ENCODE measurements at regions of chr7 and their contacts with region 1.

Region 1: DNA sequence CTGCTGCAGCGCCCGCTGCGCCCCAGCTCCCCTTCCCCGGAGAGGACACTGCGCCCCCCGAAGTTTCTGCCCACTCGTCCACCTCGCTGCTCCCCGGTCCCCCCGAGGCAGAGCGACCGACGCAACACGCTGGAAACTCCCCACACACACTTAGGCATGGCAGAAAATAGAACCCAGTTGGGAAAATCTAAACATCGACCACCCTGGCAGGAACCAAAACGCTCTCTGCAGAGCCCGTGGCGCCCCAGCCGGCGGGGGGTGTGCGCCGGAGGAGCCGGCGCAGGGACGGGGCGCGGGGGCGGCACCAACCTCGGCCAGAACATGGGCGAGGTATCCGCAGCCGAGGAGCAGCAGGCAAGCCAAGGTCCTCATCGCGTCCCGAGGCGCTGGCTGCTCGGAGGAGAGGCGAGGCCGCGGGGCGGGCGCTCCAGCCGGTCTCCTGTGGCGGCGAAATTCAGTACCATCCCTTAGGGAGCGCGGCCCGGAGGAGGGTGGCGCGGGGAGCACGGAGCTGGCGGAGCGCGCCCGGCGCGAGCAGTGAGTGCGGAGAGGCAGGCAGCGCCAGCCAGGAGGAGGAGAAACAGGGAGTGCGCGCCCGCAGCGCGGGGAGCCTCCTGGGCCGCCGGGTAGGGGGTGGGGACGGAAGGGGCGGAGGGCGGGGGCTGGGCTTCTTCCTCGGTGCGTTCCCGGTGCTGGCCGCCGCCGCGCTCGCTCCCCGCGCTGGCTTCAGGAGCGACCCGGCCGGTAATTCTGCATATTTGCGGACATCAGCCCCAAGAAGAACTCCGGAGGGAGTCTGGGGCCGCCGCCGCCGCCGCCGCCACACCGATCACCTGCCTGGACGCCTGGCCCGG is 789 bp downstream of the PDGFA start:
- DNase-seq: peak; percentile 88 to 90 (median 89)
- ATAC-seq: peak; percentile 54 to 67 (median 63)
- H3K4me3 ChIP-seq: peak overlapping the region; percentile 62 to 93 (median 80)
- H3K27ac ChIP-seq: peak overlapping the region; percentile 78 to 97 (median 90)
- H3K4me1 ChIP-seq: peaks cover 0 to 89% (median 43%) of the 10 kb centered on the region in 12 donors
- H3K27me3 ChIP-seq: peaks cover 0 to 62% (median 0%) of the 10 kb centered on the region in 9 donors
- CTCF ChIP-seq: peak in 1 of 12 donors; percentile 9
- POLR2A ChIP-seq: peak in 1 of 2 donors; percentile 62

Region 2: GRCh38 chr7:593324-594115 is 74.7 kb after region 1 on chr7:
- intact Hi-C with region 1: loop called in 1 of 10 experiments (anchors 5 kb)
- DNase-seq: peak; percentile 40 to 65 (median 51)
- ATAC-seq: peak in 3 of 4 donors; percentile 46 to 61 (median 51)
- H3K4me3 ChIP-seq: peak overlapping the region in 2 of 12 donors; percentile 10
- H3K27ac ChIP-seq: peak overlapping the region in 5 of 12 donors; percentile 30 to 64 (median 43)
- H3K4me1 ChIP-seq: peaks cover 0 to 32% (median 12%) of the 10 kb centered on the region in 12 donors
- H3K27me3 ChIP-seq: no peaks in the 10 kb centered on the region
- CTCF ChIP-seq: no peak
- POLR2A ChIP-seq: no peak

Region 3: GRCh38 chr7:657565-658119 is 138.8 kb after region 1 on chr7:
- intact Hi-C with region 1: loop called in 3 of 10 experiments (anchors 10 kb)
- DNase-seq: peak in 1 of 5 donors; percentile 55
- ATAC-seq: peak; percentile 90 to 99 (median 97)
- H3K4me3 ChIP-seq: peak overlapping the region in 3 of 12 donors; percentile 1 to 13 (median 13)
- H3K27ac ChIP-seq: peak overlapping the region in 11 of 12 donors; percentile 66 to 91 (median 74)
- H3K4me1 ChIP-seq: peaks cover 0 to 14% (median 6%) of the 10 kb centered on the region in 12 donors
- H3K27me3 ChIP-seq: no peaks in the 10 kb centered on the region
- CTCF ChIP-seq: no peak
- POLR2A ChIP-seq: no peak

Region 4: GRCh38 chr7:726084-726853 is 207.4 kb after region 1 on chr7 and contains the start of gene DNAAF5:
- intact Hi-C with region 1: loop called in 7 of 10 experiments (anchors 5 kb)
- DNase-seq: peak; percentile 87 to 92 (median 89)
- ATAC-seq: peak; percentile 62 to 92 (median 88)
- H3K4me3 ChIP-seq: peak within 1 kb of the TSS; percentile 49 to 98 (median 78)
- H3K27ac ChIP-seq: peak within 1 kb of the TSS in 11 of 12 donors; percentile 50 to 83 (median 78)
- H3K4me1 ChIP-seq: peaks cover under 1 to 33% (median 21%) of the 10 kb centered on the region in 12 donors
- H3K27me3 ChIP-seq: no peaks in the 10 kb centered on the region
- CTCF ChIP-seq: peak in 1 of 12 donors; percentile 9
- POLR2A ChIP-seq: peak in 1 of 2 donors; percentile 52
- total RNA-seq, gene DNAAF5: 13.9 to 45.8 (median 23.7) TPM

Region 5: DNA sequence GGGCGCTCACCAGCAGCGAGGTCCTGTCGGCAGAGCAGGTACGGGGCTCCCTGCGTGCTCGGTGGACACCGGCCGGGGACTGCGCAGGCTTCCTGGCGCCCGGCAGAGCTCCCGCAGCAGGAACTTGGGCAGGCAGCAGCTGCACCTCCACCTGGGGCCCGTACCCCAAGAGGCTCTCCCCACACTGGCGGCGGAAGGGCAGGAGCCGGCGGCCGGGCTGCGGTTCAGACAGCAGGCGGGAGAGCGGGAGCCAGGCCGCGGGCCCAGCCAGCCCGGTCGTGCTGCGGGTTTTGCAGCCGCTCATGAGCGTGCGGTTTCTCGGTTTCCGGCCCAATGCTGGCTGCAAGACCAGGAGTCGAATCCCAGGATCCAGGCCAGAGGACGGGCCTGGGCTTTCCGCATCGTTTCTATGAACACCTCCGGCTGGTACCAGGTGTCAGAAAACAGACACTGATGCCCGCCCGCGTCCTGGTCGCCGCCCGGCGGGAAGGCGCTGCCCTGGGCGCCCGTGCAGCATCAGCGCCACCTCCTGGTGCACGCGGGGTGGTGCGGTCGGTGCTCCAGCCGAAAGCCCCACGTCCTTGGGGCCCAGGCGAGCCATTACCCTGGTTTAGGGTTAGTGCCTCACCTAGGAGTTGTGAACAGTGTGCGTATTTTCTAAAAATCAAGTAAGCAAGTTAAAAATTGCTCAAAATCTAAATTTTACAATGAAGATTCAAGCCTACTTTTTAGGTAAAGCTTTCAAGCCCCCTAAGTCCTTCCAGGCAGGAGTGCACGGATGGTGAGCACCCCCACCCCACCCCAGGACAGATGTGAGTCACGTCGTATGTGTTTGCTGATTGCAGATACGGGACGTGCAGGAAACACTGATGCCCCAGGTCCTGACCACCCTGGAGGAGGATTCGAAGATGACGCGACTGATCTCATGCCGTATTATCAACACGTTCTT is 255.6 kb after region 1 on chr7:
- intact Hi-C with region 1: loop called in 3 of 10 experiments (anchors 5 to 10 kb)
- DNase-seq: peak in 3 of 5 donors; percentile 52 to 61 (median 52)
- ATAC-seq: peak in 3 of 4 donors; percentile 24 to 64 (median 44)
- H3K4me3 ChIP-seq: no peak overlapping the region
- H3K27ac ChIP-seq: no peak overlapping the region
- H3K4me1 ChIP-seq: peaks cover 0 to 34% (median 20%) of the 10 kb centered on the region in 12 donors
- H3K27me3 ChIP-seq: no peaks in the 10 kb centered on the region
- CTCF ChIP-seq: peak; percentile 82 to 97 (median 92)
- POLR2A ChIP-seq: no peak

Measured in heart left ventricle (tissue), 16 donors.